Activated T-helper 1 cell treated with anti-CD3 and anti-CD28 coated beads, Interleukin-12 subunit alpha, Interleukin-12 subunit beta, Interleukin-2, Interleukin-4 antibody, amounts not matched to agents 30 ng/mL and 10 ng/mL and 1 ng/mL, durations not matched to agents 14 hours and 24 hours and 36 hours (primary cell): ENCODE measurements at regions of chr17 and their contacts with region 1.

Region 1: GRCh38 chr17:40622509-40622928 is 25.1 kb downstream of the SMARCE1 start:
- DNase-seq: no peak
- H3K4me3 Mint-ChIP-seq: peak overlapping the region; percentile 35
- H3K27ac Mint-ChIP-seq: peak overlapping the region; percentile 71
- H3K4me1 Mint-ChIP-seq: peaks cover 70% of the 10 kb centered on the region
- H3K27me3 Mint-ChIP-seq: no peaks in the 10 kb centered on the region

Region 2: DNA sequence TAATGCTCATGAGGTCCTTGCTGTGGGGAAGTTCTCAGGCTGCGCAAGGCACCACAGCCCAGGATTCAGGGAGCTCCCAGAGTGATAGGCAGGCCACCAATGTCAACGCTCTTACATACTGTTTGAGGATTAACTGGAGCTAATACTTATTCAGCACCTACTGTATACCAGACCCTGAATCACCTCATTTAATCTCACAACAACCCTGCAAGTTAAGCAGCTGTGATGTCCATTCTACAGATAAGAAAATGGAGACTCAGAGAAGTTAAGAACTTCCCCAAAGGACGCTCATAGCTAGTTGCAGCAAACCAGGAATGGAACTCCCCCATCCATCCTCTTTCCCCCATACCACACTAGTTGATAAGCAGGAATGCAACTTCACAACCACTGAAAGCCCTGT is 31.8 kb before region 1 on chr17:
- intact Hi-C with region 1: no loop called
- DNase-seq: no peak
- H3K4me3 Mint-ChIP-seq: no peak overlapping the region
- H3K27ac Mint-ChIP-seq: no peak overlapping the region
- H3K4me1 Mint-ChIP-seq: peaks cover 58% of the 10 kb centered on the region
- H3K27me3 Mint-ChIP-seq: no peaks in the 10 kb centered on the region

Region 3: GRCh38 chr17:40664582-40665333 is 42.2 kb after region 1 on chr17 and contains the start of gene KRT222:
- intact Hi-C with region 1: loop called (anchors 5 kb)
- DNase-seq: no peak
- H3K4me3 Mint-ChIP-seq: peak within 1 kb of the TSS; percentile 33
- H3K27ac Mint-ChIP-seq: no peak within 1 kb of the TSS
- H3K4me1 Mint-ChIP-seq: peaks cover 12% of the 10 kb centered on the region
- H3K27me3 Mint-ChIP-seq: peaks cover 34% of the 10 kb centered on the region
- total RNA-seq, gene KRT222: not detected in 2 replicates

Region 4: DNA sequence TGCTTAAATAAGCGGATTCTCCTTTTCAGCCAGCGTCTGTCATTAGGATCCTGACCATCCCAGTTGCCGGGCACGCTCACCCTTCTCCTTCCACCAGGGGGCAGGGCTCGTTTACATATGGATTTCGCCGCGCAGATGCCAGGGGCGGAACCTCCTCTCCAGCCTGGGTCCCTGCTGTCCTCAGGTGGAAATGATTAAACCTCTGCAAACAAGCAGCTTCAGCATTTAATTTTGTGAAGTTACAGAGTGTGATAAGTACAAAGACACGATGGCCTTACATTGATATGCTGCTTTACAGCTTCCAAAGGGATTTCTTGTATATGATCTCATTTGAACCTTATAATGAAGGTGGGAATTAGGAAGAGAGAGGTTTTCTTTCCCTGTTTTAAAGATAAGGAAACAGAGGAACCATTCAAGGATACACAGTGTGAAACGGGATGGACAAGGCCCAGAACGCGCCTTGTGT is 181.1 kb after region 1 on chr17:
- intact Hi-C with region 1: loop called (anchors 5 kb)
- DNase-seq: peak; percentile 49
- H3K4me3 Mint-ChIP-seq: no peak overlapping the region
- H3K27ac Mint-ChIP-seq: no peak overlapping the region
- H3K4me1 Mint-ChIP-seq: no peaks in the 10 kb centered on the region
- H3K27me3 Mint-ChIP-seq: peaks cover 39% of the 10 kb centered on the region

Region 5: DNA sequence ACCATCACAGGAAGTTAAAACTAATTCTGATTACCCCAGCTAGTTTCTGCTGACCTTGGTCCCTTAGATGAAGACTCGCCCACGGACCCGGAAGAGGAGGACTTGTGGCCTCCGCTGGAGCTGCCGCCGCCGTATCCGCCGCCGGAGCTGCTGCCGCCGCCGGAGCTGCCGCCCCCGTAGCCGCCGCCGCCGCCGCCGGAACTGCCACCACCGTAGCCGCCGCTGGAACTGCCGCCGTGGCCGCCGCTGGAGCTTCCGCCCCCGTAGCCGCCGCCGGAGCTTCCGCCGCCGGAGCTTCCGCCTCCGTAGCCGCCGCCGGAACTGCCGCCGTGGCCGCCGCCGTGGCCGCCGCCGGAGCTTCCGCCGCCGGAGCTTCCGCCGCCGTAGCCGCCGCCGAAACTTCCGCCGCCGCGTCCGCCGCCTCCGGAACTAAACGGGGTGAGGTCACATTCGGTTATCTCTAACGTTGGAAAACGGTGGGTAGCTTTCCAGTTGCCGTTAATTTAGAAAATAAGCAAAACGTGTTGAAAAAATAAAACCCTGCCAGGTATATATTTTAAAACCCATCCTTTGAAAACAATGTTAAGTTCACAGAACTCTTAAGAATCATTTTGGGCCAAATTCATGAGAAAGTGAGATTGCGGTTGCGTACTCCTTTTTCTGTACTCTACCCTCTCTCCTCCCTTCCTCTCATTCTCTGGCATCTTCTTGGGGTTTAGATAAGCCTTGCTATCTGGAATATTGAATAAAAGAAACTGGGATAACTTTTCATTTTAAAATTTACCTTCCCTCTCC is 196.4 kb after region 1 on chr17:
- intact Hi-C with region 1: loop called (anchors 2 kb)
- DNase-seq: peak; percentile 85
- H3K4me3 Mint-ChIP-seq: peak overlapping the region; percentile 96
- H3K27ac Mint-ChIP-seq: peak overlapping the region; percentile 88
- H3K4me1 Mint-ChIP-seq: peaks cover 31% of the 10 kb centered on the region
- H3K27me3 Mint-ChIP-seq: peaks cover 11% of the 10 kb centered on the region

Region 6: DNA sequence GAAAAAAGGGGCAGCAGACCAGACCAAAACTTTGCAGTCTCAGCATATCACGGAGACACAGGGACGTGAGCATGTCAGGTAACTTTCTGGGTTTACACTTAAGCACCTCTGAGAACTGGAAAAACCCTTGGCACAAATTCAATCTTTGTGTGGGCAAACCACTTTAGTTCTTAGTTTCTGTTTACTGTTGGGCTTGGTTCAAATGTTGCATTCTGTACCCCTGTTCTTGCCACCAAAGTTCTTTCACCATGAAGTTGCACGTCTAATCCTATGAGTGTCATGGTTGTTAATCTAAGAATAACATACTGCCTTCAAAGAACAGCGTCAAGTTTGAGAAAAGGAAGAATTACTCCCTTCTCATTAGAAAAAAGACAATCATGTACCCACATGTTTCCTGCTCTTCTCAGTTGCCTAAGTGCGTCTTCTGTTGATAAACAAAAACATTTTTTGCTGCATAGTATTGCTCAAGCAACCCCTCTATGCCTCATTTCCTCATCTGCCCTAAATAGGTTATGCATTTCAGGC is 716.5 kb after region 1 on chr17:
- intact Hi-C with region 1: loop called (anchors 10 kb)
- DNase-seq: peak; percentile 36
- H3K4me3 Mint-ChIP-seq: peak overlapping the region; percentile 43
- H3K27ac Mint-ChIP-seq: peak overlapping the region; percentile 52
- H3K4me1 Mint-ChIP-seq: peaks cover 52% of the 10 kb centered on the region
- H3K27me3 Mint-ChIP-seq: peaks cover 16% of the 10 kb centered on the region